ENCODE measurements at regions of chr16 and their contacts with region 1.

Region 1: DNA sequence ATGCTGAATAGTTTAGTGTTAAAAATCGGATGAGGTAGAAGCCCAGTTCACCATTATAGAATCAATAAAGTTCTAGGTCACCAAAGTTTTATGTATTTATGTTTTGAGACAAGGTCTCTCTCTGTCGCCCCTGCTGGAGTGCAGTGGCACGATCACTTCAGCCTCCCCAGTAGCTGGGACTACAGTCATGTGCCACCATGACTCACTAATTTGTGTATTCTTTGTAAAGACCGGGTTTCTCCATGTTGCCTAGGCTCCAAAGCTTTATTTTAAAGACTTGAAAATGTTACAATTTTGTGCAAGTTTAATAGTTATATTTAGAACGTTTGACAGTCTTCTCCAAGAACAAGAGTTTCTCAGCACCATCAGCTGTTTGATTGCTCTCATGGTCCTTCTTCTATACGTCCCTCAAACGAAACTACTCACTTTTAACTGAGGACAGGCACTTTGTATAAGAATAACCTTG is 32.1 kb downstream of the NDE1 start:
- DNase-seq: peak in 4 of 10 donors; percentile 20 to 93 (median 34)

Region 2: GRCh38 chr16:15643048-15643945 is 38.8 kb before region 1 on chr16 and contains the start of gene MARF1:
- intact Hi-C with region 1: loop called (anchors 5 kb)
- DNase-seq: peak; percentile 93 to 99 (median 97)

Region 3: GRCh38 chr16:15739950-15740349 is 57.8 kb after region 1 on chr16:
- intact Hi-C with region 1: no loop called
- DNase-seq: no peak